BJ (cell line): ENCODE measurements at regions of chr2 and their contacts with region 1.

Region 1: DNA sequence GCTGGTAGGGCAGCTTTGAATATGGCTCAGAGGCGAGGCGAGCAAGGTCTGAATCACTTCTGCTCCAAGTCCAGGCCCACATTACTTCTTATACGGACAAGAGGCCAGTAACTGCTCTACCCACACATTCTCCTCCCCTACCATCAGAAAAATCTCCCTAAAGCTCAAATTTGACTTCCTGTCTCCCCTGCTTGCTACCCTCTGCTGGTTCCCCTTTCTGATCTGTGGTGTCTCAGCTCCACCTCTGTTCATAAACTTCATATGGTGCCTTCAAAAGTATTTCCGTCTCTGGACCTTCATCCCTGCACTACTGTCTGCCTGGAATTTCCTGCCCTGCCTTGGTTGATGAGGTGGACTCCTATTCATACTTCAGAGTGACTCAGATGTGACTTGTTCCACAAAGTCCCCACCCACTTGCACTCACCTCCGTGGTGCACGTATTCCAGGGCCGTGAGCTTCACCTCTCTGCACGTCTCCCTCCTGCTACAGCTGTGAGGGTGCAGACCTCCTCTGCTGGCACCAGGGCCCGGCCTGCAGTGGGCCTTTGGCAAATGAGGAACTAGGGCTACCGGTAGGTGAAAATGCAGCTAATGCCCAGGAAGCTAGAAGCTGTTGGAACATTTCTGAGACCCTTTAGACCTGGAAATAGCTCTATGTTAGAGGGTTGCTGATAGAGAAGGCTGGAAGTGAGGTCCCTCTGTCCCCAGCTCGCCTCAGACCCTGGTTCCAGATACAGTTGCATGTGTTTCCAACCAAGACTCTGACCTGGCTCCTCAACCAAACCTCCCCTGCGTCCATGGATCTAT is 24.6 kb upstream of the KCMF1 start:
- DNase-seq: peak; percentile 74
- H3K4me3 ChIP-seq: no peak overlapping the region
- H3K27me3 ChIP-seq: no peaks in the 10 kb centered on the region
- CTCF ChIP-seq: no peak

Region 2: GRCh38 chr2:84958135-84959044 is 12.0 kb after region 1 on chr2:
- CTCF ChIA-PET with region 1: interaction called, 13 read pairs
- POLR2A ChIA-PET with region 1: interaction called, 7 read pairs
- DNase-seq: peak; percentile 93
- H3K4me3 ChIP-seq: no peak overlapping the region
- H3K27me3 ChIP-seq: no peaks in the 10 kb centered on the region
- CTCF ChIP-seq: no peak

Region 3: GRCh38 chr2:85199698-85200097 is 253.3 kb after region 1 on chr2:
- CTCF ChIA-PET with region 1: no interaction called
- POLR2A ChIA-PET with region 1: no interaction called
- DNase-seq: no peak
- H3K4me3 ChIP-seq: no peak overlapping the region
- H3K27me3 ChIP-seq: no peaks in the 10 kb centered on the region
- CTCF ChIP-seq: no peak